ENCODE measurements at regions of chr5 and their contacts with region 1.

Region 1: GRCh38 chr5:73591102-73591695 is 25.7 kb downstream of the UTP15 start:
- DNase-seq: peak; percentile 82 to 92 (median 87)
- H3K4me3 ChIP-seq: no peak overlapping the region
- H3K27ac ChIP-seq: no peak overlapping the region
- H3K4me1 ChIP-seq: no peaks in the 10 kb centered on the region
- H3K27me3 ChIP-seq: no peaks in the 10 kb centered on the region

Region 2: DNA sequence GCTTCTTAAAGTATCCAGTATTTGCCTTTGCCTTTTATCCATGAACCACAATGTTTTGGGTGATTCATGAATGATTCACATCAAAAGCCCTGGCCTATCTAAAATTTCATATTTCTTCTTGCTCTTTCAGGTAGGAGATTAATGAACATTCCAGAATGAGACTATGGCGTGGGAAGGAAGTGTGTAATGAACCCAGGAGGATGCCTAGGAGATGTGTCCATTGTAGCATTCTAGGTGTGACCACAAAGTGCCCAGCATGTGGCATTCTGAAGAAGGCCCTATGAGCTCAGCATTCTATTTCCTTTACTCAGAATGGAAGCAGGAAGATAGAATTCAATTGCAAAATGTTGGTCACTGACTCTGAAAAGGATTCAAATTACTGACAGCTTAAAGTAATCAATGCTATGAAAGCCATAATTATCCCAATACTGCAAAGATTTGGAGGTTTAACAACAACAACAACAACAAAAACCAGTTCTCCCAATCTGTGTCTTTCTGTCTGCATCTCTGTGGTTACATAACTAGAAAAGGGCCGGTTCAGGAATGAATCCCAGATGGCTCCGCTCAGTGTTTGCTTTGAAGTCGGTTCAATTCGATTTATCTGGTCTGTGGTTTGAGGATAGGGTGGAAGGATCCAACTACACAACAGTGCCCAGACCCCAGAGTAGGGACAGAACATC is 269.3 kb before region 1 on chr5:
- CTCF ChIA-PET with region 1: no interaction called
- POLR2A ChIA-PET with region 1: no interaction called
- DNase-seq: no peak
- H3K4me3 ChIP-seq: no peak overlapping the region
- H3K27ac ChIP-seq: no peak overlapping the region
- H3K4me1 ChIP-seq: no peaks in the 10 kb centered on the region
- H3K27me3 ChIP-seq: peaks cover 12 to 65% (median 16%) of the 10 kb centered on the region in 5 experiments

Region 3: GRCh38 chr5:73633060-73633459 is 41.9 kb after region 1 on chr5:
- CTCF ChIA-PET with region 1: interaction called, 11 read pairs
- POLR2A ChIA-PET with region 1: no interaction called
- DNase-seq: peak; percentile 14 to 40 (median 38)
- H3K4me3 ChIP-seq: no peak overlapping the region
- H3K27ac ChIP-seq: no peak overlapping the region
- H3K4me1 ChIP-seq: no peaks in the 10 kb centered on the region
- H3K27me3 ChIP-seq: peaks cover 0 to 20% (median 10%) of the 10 kb centered on the region in 5 experiments

Region 4: DNA sequence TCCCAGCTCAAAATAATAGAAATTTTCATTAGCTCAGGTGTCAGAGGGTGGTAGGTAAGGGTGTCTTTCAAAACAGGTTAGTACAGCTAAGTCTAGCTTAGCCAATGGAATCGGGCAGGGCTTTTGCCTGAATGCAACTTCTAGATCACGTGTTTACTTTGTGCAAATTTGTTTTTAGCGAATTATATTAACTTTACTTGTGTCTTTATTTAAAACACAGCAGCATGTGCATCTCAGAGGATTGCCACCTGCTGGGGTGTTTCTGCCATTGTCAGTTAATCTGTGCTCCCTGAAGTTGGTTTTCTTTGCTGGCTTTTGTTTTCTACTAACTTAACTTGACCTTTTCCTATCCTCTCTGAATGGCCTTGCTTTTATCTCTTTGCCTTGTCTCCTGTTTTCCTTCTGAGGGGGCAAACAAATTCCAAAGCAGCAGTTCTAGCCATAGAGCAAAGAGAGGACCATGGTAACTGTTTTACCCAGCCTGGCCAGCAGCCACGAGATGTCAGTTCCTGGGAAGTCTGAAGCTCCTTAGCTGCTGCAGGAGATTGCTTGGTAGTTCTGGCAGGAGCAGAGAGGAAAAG is 102.4 kb after region 1 on chr5:
- CTCF ChIA-PET with region 1: interaction called, 50 read pairs
- POLR2A ChIA-PET with region 1: no interaction called
- DNase-seq: peak; percentile 36 to 61 (median 54)
- H3K4me3 ChIP-seq: no peak overlapping the region
- H3K27ac ChIP-seq: no peak overlapping the region
- H3K4me1 ChIP-seq: peaks cover 0 to 8% (median 5%) of the 10 kb centered on the region in 4 experiments
- H3K27me3 ChIP-seq: no peaks in the 10 kb centered on the region

Region 5: GRCh38 chr5:73729329-73729728 is 138.1 kb after region 1 on chr5:
- CTCF ChIA-PET with region 1: no interaction called
- POLR2A ChIA-PET with region 1: no interaction called
- DNase-seq: no peak
- H3K4me3 ChIP-seq: no peak overlapping the region
- H3K27ac ChIP-seq: no peak overlapping the region
- H3K4me1 ChIP-seq: no peaks in the 10 kb centered on the region
- H3K27me3 ChIP-seq: no peaks in the 10 kb centered on the region

Region 6: GRCh38 chr5:73783828-73784227 is 192.6 kb after region 1 on chr5:
- CTCF ChIA-PET with region 1: interaction called, 161 read pairs
- POLR2A ChIA-PET with region 1: no interaction called
- DNase-seq: peak; percentile 77 to 92 (median 90)
- H3K4me3 ChIP-seq: no peak overlapping the region
- H3K27ac ChIP-seq: no peak overlapping the region
- H3K4me1 ChIP-seq: no peaks in the 10 kb centered on the region
- H3K27me3 ChIP-seq: peaks cover 0 to 2% (median 0%) of the 10 kb centered on the region in 5 experiments

Region 7: GRCh38 chr5:73792687-73793320 is 201.6 kb after region 1 on chr5:
- CTCF ChIA-PET with region 1: interaction called, 161 read pairs
- POLR2A ChIA-PET with region 1: no interaction called
- DNase-seq: peak; percentile 68 to 89 (median 87)
- H3K4me3 ChIP-seq: no peak overlapping the region
- H3K27ac ChIP-seq: no peak overlapping the region
- H3K4me1 ChIP-seq: peaks cover 0 to 10% (median 2%) of the 10 kb centered on the region in 4 experiments
- H3K27me3 ChIP-seq: no peaks in the 10 kb centered on the region

Measured in common myeloid progenitor, CD34-positive (primary cell).